GM13977 (cell line): ENCODE measurements at regions of chr12 and their contacts with region 1.

Region 1: DNA sequence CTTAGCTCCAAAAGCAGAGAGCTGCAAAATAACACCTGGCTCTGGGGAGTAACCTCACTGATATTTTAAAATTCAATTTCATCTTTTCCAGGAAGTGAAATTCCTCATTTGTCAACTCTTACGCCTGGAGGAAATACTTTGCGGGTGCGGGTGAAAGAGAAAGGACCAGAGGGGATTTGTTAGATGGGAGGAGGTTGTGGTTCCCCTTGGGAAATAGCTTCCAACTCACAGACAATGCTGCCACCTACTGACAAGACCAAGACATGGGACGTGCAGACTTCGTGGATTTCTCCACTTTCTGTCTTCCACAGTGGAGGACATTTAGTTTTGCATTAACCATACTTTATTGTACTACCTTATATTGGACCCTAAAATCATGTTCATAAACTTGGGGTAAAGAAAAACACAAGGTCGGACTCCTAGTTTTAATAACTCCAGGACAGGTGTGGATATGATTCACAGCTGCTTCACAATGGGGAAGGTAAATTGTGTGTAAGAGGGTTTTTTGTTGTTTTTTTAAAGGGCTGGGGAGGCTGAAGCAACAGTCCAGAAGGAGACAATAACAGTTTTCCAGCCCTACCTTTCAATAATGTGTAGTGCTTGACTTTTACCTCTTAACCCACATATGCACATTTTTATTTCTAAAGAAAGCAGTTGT is 10.8 kb downstream of the FBXL14 start:
- DNase-seq: peak; percentile 71
- CTCF ChIP-seq: peak; percentile 90

Region 2: GRCh38 chr12:1117970-1118563 is 465.5 kb before region 1 on chr12:
- in situ Hi-C with region 1: loop called (anchors 10 kb)
- DNase-seq: peak; percentile 23
- CTCF ChIP-seq: peak; percentile 87